MCF 10A (cell line): ENCODE measurements at regions of chr12 and their contacts with region 1.

Region 1: GRCh38 chr12:89756585-89757321 is 48.1 kb upstream of the ATP2B1 start:
- DNase-seq: peak; percentile 98
- H3K4me3 Mint-ChIP-seq: peak overlapping the region; percentile 38
- H3K27ac Mint-ChIP-seq: peak overlapping the region; percentile 95
- H3K4me1 Mint-ChIP-seq: peaks cover 34% of the 10 kb centered on the region
- H3K27me3 Mint-ChIP-seq: no peaks in the 10 kb centered on the region
- CTCF ChIP-seq: no peak

Region 2: DNA sequence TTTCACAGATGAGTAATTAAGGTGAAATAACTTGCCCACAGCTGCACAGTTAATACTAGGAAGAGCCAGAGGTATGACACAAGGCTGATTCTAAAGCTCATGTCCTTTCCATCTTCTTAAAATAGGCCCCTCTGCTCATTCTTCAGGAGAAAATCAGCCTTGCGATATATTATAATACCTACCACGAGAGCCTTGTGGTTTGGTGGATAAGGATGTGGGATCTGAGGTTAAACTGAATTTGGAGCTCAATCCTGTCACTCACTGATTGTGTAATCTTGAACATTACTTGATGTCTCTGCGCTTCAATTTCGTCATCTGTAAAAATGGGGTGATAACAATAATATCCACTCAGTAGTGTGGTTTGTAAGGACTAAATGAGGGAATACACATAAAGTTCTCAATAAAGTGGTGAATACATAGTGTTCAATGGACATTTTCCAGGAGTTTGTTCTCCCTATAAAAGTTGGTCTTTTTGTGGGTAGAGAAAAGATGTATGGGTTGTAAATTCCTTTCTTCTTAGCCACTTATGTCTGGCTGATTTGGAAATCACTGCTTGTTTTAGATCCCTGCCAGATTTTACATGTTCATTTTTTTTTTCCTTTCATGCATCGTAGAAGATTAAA is 23.1 kb before region 1 on chr12:
- CTCF ChIA-PET with region 1: no interaction called
- POLR2A ChIA-PET with region 1: interaction called, 4 read pairs
- intact Hi-C with region 1: loop called (anchors 1 kb)
- DNase-seq: peak; percentile 86
- H3K4me3 Mint-ChIP-seq: peak overlapping the region; percentile 4
- H3K27ac Mint-ChIP-seq: peak overlapping the region; percentile 82
- H3K4me1 Mint-ChIP-seq: peaks cover 36% of the 10 kb centered on the region
- H3K27me3 Mint-ChIP-seq: no peaks in the 10 kb centered on the region
- CTCF ChIP-seq: no peak

Region 3: DNA sequence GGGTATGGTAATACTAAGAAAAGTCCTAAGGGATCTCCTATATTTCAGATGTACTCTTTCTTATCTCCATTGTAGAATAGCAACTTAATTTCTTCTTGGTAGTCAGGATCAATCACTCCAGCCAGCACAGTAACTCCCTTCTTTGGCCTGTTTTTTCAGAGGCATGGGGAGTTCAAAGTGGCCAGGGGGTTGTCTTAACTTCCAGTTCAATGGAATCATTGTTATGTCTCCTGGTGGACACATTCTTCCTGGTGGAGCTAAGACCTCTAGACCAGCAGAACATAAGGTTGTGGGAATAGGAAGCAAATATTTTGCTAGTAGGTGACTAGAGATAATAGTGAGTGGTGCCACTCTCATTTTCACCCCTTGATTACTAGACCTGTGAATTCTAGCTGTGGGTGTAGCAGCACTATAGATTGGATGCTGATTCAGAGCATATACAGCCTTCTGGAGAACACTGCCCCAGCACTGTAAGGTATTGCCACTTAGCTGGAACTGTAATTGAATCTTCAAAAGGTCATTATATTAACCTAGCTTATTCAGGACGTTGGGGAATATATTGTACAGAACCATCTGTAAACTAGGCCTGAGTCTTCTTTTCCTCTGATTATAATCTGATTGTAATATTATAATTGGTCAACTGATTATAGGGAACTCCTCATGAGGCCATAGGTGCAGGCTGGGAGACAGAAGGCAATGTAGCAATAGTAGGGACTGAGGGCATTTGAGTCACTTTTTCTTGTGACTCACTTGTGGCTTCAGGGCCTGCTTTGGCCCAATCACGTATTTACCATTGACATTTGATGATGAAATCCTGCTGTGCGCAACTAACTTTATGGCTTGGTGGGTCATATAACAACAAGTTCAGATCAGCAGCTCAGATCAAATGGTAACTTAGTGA is 12.1 kb after region 1 on chr12:
- CTCF ChIA-PET with region 1: interaction called, 3 read pairs
- POLR2A ChIA-PET with region 1: interaction called, 13 read pairs
- intact Hi-C with region 1: loop called (anchors 1 kb)
- DNase-seq: peak; percentile 97
- H3K4me3 Mint-ChIP-seq: no peak overlapping the region
- H3K27ac Mint-ChIP-seq: peak overlapping the region; percentile 84
- H3K4me1 Mint-ChIP-seq: peaks cover 21% of the 10 kb centered on the region
- H3K27me3 Mint-ChIP-seq: no peaks in the 10 kb centered on the region
- CTCF ChIP-seq: no peak

Region 4: GRCh38 chr12:89840162-89840922 is 83.6 kb after region 1 on chr12:
- CTCF ChIA-PET with region 1: no interaction called
- POLR2A ChIA-PET with region 1: no interaction called
- intact Hi-C with region 1: no loop called
- DNase-seq: no peak
- H3K4me3 Mint-ChIP-seq: no peak overlapping the region
- H3K27ac Mint-ChIP-seq: no peak overlapping the region
- H3K4me1 Mint-ChIP-seq: peaks cover 6% of the 10 kb centered on the region
- H3K27me3 Mint-ChIP-seq: no peaks in the 10 kb centered on the region
- CTCF ChIP-seq: no peak

Region 5: DNA sequence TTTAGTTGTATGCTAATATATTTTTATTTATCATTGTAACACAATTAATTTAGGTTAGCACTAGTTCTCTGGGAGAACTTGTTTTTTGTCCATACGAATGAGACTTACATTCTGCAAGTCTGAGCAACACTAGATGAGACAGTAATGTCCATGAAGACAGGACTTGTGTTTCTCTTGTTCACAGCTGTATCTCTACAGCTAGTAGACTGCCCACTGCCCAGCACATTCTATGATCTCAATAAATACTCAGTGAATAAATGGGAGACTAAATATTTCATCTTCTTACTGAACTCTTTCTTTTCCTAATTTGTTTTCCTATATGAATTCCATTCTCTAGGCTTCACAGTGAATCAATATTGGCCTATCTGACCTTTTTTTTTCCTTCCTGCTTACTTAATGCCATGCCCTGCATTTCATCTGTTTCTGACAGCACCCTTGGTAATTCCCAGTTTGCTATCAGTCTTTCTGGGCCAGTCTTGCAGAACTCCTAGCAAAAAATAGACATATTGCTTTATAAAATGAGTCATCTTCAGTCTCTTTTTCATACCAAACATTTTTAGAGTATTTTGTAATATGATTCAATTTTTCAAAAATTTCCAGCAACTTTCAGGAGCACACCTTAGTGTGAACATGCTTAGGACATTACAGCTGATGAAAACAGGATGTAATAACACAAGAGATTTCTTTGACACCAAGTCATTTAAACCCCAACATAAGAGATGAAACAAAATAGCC is 137.4 kb after region 1 on chr12:
- CTCF ChIA-PET with region 1: no interaction called
- POLR2A ChIA-PET with region 1: no interaction called
- intact Hi-C with region 1: loop called (anchors 1 kb)
- DNase-seq: peak; percentile 42
- H3K4me3 Mint-ChIP-seq: no peak overlapping the region
- H3K27ac Mint-ChIP-seq: peak overlapping the region; percentile 80
- H3K4me1 Mint-ChIP-seq: peaks cover 17% of the 10 kb centered on the region
- H3K27me3 Mint-ChIP-seq: no peaks in the 10 kb centered on the region
- CTCF ChIP-seq: no peak

Region 6: DNA sequence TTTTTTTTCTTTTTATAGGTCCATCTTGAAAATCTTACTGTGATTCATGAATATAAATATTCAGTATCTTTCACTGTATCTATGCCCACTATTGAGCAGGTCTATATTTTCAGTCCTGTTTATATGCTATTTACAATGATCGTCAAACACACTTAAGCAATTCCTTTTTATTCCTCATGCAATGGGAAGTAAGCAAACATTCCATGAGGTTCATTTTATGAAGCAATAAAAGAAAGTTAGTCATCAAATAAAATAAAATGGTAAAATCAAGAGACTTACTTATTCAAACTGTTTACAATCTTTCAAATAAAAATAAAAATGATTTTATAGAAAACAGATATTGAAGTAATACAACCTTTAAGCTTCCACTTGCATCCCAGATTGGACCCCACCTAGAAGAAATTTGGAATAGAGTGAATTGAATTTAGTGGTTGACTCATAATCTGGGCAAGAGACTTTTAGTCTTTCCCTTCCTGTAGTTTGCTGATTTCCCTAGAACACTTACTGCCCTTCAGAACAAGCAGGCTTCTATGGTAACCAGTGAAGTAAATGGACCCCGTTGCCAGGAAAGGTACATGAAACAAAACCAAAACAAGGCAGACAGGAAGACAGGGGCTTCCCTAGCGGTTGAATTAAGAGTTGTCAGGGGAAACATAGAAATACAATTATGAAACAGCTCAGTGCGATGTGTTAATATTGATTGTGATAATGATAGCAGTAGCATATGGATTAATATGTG is 192.9 kb after region 1 on chr12:
- CTCF ChIA-PET with region 1: interaction called, 4 read pairs
- POLR2A ChIA-PET with region 1: interaction called, 8 read pairs
- intact Hi-C with region 1: loop called (anchors 1 kb)
- DNase-seq: peak; percentile 91
- H3K4me3 Mint-ChIP-seq: peak overlapping the region; percentile 13
- H3K27ac Mint-ChIP-seq: peak overlapping the region; percentile 93
- H3K4me1 Mint-ChIP-seq: peaks cover 42% of the 10 kb centered on the region
- H3K27me3 Mint-ChIP-seq: no peaks in the 10 kb centered on the region
- CTCF ChIP-seq: peak; percentile 29

Region 7: DNA sequence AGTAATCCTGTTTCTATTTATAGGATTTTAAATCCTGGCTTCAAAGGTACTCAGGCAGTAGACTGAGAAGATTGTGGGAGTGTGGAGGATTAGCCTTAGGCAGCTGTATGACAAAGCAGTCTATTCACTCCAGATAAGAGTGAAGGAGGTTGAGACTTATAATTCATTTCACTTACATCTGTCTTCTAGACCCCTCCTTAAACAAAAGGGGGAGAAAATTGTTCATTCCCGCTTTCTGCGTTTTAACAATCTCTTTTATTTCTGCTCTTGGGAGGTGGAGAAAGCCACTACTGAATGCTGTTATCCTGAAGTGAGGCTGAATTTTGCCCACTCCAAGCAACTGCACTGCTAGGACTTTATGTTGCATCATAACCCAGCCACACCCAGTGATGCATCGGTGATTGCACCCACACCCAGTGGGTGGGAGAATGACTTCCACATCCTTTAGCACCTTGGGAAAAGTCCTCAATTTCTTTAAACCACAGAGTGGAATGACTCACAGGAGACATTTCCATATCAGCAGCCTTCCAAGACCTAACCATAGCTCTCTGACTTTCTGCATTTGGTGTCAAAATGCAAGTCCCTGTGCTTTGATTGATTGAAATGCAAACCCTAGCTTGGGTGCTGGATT is 334.4 kb after region 1 on chr12:
- CTCF ChIA-PET with region 1: no interaction called
- POLR2A ChIA-PET with region 1: no interaction called
- intact Hi-C with region 1: loop called (anchors 2 kb)
- DNase-seq: peak; percentile 98
- H3K4me3 Mint-ChIP-seq: peak overlapping the region; percentile 9
- H3K27ac Mint-ChIP-seq: peak overlapping the region; percentile 91
- H3K4me1 Mint-ChIP-seq: peaks cover 17% of the 10 kb centered on the region
- H3K27me3 Mint-ChIP-seq: no peaks in the 10 kb centered on the region
- CTCF ChIP-seq: no peak